ENCODE measurements at regions of chr1 and their contacts with region 1.

Region 1: DNA sequence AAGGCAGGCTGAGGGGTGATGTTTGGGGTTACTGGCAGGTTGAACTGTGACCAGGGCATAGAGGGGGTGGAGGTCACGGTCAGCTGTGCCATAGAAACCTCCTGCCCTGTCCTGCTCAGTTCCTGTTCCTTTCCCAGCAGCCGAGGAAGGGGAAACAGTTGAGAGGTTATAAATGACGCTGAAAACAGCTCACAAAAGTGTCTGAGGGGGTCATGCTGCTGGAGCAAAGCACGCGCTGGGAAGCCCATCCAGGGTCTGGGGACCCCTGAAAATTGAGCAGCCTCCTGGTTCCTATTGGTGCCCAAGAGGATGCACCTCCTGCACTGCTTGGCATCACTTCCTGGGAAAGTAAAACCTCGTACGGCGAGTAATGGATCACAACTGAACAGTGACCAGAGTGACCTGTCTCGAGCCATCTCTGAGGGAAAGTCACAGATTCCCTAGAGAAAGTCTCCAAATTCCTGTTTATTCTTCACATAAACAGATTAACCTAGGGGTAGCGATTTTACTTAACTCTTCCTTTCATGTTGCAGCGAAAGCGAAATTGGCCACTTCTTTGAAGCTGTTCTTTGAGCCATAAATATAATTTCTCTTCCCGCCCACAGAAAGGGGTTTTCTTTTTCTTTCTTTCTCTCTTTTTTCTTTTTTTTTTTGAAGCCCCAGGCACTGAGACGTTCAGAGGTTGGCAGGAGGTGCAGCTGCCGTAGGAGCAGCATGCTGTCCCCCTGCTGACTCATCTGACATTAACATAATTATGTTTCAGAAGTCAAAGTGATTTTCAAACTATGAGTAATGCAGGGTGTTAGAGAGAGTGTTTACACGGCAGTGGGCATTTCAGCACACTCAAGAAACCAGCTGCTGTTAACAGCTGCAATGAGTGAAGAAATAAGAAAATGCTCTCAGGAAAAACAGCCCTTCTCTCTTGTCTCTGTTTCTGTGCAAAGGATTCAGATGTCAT is 41.8 kb upstream of the ATF3 start:
- DNase-seq: peak; percentile 82
- ATAC-seq: peak; percentile 98
- H3K4me3 Mint-ChIP-seq: peak overlapping the region; percentile 86
- H3K27ac Mint-ChIP-seq: peak overlapping the region; percentile 97
- H3K4me1 Mint-ChIP-seq: peaks cover 39% of the 10 kb centered on the region
- H3K27me3 Mint-ChIP-seq: no peaks in the 10 kb centered on the region
- CTCF ChIP-seq: no peak

Region 2: DNA sequence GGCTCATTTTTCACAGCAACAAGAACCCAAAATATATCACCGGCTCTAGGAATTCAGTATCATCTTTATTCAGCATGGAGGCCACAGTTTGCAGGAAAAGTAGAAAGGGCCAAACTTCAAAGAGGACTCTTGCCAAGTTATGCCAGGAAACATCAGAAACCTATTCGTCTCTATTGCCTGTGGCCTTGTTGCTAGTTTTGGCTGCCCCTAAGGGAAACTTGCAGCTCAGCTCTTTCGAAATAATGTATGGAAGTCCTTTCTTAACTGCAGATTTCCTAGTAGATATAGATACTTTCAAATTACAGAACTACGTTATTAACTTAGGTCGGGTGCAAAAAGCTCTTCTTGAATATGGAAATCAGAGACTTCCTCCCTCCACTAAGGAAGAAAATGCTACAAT is 138.3 kb before region 1 on chr1:
- CTCF ChIA-PET with region 1: no interaction called
- POLR2A ChIA-PET with region 1: no interaction called
- intact Hi-C with region 1: no loop called
- DNase-seq: no peak
- ATAC-seq: no peak
- H3K4me3 Mint-ChIP-seq: no peak overlapping the region
- H3K27ac Mint-ChIP-seq: no peak overlapping the region
- H3K4me1 Mint-ChIP-seq: peaks cover 17% of the 10 kb centered on the region
- H3K27me3 Mint-ChIP-seq: peaks cover 3% of the 10 kb centered on the region
- CTCF ChIP-seq: no peak

Region 3: GRCh38 chr1:212595787-212596714 is 29.2 kb after region 1 on chr1:
- CTCF ChIA-PET with region 1: interaction called, 17 read pairs
- POLR2A ChIA-PET with region 1: interaction called, 4 read pairs
- intact Hi-C with region 1: loop called (anchors 2 kb)
- DNase-seq: peak; percentile 70
- ATAC-seq: peak; percentile 92
- H3K4me3 Mint-ChIP-seq: peak overlapping the region; percentile 62
- H3K27ac Mint-ChIP-seq: peak overlapping the region; percentile 94
- H3K4me1 Mint-ChIP-seq: peaks cover 30% of the 10 kb centered on the region
- H3K27me3 Mint-ChIP-seq: peaks cover 6% of the 10 kb centered on the region
- CTCF ChIP-seq: peak; percentile 66

Region 4: GRCh38 chr1:212699104-212699624 is 132.4 kb after region 1 on chr1:
- CTCF ChIA-PET with region 1: no interaction called
- POLR2A ChIA-PET with region 1: no interaction called
- intact Hi-C with region 1: no loop called
- DNase-seq: peak; percentile 75
- ATAC-seq: peak; percentile 75
- H3K4me3 Mint-ChIP-seq: peak overlapping the region; percentile 79
- H3K27ac Mint-ChIP-seq: peak overlapping the region; percentile 92
- H3K4me1 Mint-ChIP-seq: peaks cover 57% of the 10 kb centered on the region
- H3K27me3 Mint-ChIP-seq: peaks cover 1% of the 10 kb centered on the region
- CTCF ChIP-seq: peak; percentile 79